Activated CD4-positive, alpha-beta memory T cell treated with anti-CD3 and anti-CD28 coated beads for 36 hours (primary cell): ENCODE measurements at regions of chr3 and their contacts with region 1.

Region 1: DNA sequence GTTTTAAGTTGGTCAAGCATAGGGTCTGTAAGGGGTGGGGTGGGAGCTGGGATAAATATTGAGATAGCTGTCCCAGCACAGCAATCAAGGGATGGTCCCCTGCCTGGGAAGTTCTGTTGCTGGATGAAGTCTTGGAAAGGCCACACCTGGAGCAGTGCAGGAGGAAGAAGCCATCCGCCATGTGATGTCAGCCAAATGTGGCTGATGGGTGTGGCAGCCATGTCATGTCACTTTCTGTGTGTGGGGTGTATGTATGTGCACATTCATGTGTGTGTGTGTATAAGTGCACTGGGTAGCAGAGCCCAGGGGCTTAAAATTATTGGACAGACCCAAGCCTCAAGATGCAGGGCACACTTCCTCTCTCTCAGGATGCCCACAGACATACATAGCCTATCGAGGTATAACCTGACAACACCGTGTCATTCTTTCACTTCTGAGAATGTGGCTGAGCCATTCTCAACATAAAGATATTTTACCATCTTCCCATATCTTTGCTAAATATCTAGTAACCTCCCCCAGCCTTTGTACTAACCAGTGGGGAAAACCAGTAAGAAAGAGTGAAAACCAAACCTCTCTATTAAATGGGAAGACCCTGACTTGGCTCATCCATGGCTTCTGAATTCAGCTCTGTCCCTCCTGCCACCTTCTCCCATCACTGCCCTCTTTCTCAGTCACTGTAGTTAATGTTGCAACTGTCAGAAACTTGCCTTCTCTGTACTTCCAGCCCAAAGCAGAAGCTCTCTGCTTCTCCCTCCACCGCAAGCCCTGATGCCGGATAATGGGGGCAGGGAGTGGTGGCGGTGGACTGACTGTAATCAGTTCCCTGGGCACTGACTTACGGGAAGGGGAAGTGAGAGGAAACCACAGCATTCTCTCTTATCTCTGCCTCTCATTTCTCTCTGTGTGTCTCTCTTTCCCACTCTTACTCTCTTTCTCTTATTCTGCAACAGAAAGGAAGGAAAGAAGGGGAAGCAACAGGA is 11.2 kb downstream of the TNFSF10 start:
- DNase-seq: peak; percentile 89
- H3K4me3 Mint-ChIP-seq: peak overlapping the region; percentile 52
- H3K27ac Mint-ChIP-seq: peak overlapping the region; percentile 93
- H3K4me1 Mint-ChIP-seq: peaks cover 81% of the 10 kb centered on the region
- H3K27me3 Mint-ChIP-seq: no peaks in the 10 kb centered on the region

Region 2: GRCh38 chr3:172321035-172321434 is 191.0 kb before region 1 on chr3:
- CTCF ChIA-PET with region 1: no interaction called
- POLR2A ChIA-PET with region 1: no interaction called
- intact Hi-C with region 1: loop called (anchors 5 kb)
- DNase-seq: no peak
- H3K4me3 Mint-ChIP-seq: no peak overlapping the region
- H3K27ac Mint-ChIP-seq: no peak overlapping the region
- H3K4me1 Mint-ChIP-seq: peaks cover 25% of the 10 kb centered on the region
- H3K27me3 Mint-ChIP-seq: no peaks in the 10 kb centered on the region

Region 3: GRCh38 chr3:172397716-172398405 is 114.2 kb before region 1 on chr3:
- CTCF ChIA-PET with region 1: no interaction called
- POLR2A ChIA-PET with region 1: no interaction called
- intact Hi-C with region 1: no loop called
- DNase-seq: no peak
- H3K4me3 Mint-ChIP-seq: no peak overlapping the region
- H3K27ac Mint-ChIP-seq: no peak overlapping the region
- H3K4me1 Mint-ChIP-seq: no peaks in the 10 kb centered on the region
- H3K27me3 Mint-ChIP-seq: no peaks in the 10 kb centered on the region

Region 4: GRCh38 chr3:172550347-172550943 is 38.4 kb after region 1 on chr3:
- CTCF ChIA-PET with region 1: no interaction called
- POLR2A ChIA-PET with region 1: no interaction called
- intact Hi-C with region 1: loop called (anchors 1 kb)
- DNase-seq: peak; percentile 91
- H3K4me3 Mint-ChIP-seq: no peak overlapping the region
- H3K27ac Mint-ChIP-seq: peak overlapping the region; percentile 52
- H3K4me1 Mint-ChIP-seq: peaks cover 32% of the 10 kb centered on the region
- H3K27me3 Mint-ChIP-seq: no peaks in the 10 kb centered on the region

Region 5: GRCh38 chr3:172580680-172581401 is 68.8 kb after region 1 on chr3:
- CTCF ChIA-PET with region 1: no interaction called
- POLR2A ChIA-PET with region 1: interaction called, 4 read pairs
- intact Hi-C with region 1: loop called (anchors 1 kb)
- DNase-seq: no peak
- H3K4me3 Mint-ChIP-seq: peak overlapping the region; percentile 18
- H3K27ac Mint-ChIP-seq: peak overlapping the region; percentile 68
- H3K4me1 Mint-ChIP-seq: peaks cover 78% of the 10 kb centered on the region
- H3K27me3 Mint-ChIP-seq: peaks cover 2% of the 10 kb centered on the region

Region 6: GRCh38 chr3:172673210-172673679 is 161.2 kb after region 1 on chr3:
- CTCF ChIA-PET with region 1: no interaction called
- POLR2A ChIA-PET with region 1: no interaction called
- intact Hi-C with region 1: no loop called
- DNase-seq: peak; percentile 83
- H3K4me3 Mint-ChIP-seq: no peak overlapping the region
- H3K27ac Mint-ChIP-seq: no peak overlapping the region
- H3K4me1 Mint-ChIP-seq: peaks cover 2% of the 10 kb centered on the region
- H3K27me3 Mint-ChIP-seq: no peaks in the 10 kb centered on the region